Right cardiac atrium (tissue), 5 donors: ENCODE measurements at regions of chr5 and their contacts with region 1.

Region 1: GRCh38 chr5:33936004-33936380 is 194 bp upstream of the RXFP3 start:
- DNase-seq: peak; percentile 68 to 87 (median 80)
- ATAC-seq: peak; percentile 89 to 91
- H3K4me3 ChIP-seq: peak overlapping the region; percentile 4
- H3K27ac ChIP-seq: no peak overlapping the region
- H3K4me1 ChIP-seq: no peaks in the 10 kb centered on the region
- H3K27me3 ChIP-seq: no peaks in the 10 kb centered on the region

Region 2: DNA sequence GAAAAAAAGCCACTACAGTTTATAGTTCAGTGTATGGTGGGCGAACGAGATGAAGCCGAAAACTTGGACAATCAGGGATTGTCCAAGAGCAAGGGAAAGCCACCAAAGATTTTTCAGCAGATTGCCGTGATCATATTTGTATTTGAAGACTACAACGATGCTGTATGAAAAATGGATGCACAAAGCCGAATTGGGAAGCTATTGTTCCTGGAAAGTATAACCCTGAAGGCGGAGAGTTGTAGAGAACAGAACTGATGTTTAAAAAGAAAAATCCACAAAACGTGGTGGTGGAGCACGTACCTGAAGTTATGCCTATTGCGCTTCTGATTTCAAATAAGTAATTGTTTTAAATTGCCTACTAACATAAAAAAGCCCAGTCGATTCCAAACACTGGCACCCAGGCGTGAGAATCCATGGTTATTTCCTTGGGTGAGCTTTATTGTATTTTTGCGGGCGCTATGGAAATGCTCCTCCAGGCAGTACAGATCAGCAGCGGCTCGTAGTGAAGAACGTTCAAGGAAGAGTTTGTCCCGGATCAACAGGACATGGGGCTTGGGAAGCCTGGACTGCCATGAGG is 496.0 kb before region 1 on chr5:
- intact Hi-C with region 1: loop called in 1 of 4 experiments (anchors 10 kb)
- DNase-seq: no peak
- ATAC-seq: no peak
- H3K4me3 ChIP-seq: peak overlapping the region; percentile 91
- H3K27ac ChIP-seq: peak overlapping the region; percentile 98
- H3K4me1 ChIP-seq: no peaks in the 10 kb centered on the region
- H3K27me3 ChIP-seq: no peaks in the 10 kb centered on the region

Region 3: GRCh38 chr5:33468811-33469435 is 467.1 kb before region 1 on chr5:
- intact Hi-C with region 1: loop called in 1 of 4 experiments (anchors 10 kb)
- DNase-seq: no peak
- ATAC-seq: no peak
- H3K4me3 ChIP-seq: no peak overlapping the region
- H3K27ac ChIP-seq: no peak overlapping the region
- H3K4me1 ChIP-seq: no peaks in the 10 kb centered on the region
- H3K27me3 ChIP-seq: no peaks in the 10 kb centered on the region